ENCODE measurements at regions of chr19 and their contacts with region 1.

Region 1: DNA sequence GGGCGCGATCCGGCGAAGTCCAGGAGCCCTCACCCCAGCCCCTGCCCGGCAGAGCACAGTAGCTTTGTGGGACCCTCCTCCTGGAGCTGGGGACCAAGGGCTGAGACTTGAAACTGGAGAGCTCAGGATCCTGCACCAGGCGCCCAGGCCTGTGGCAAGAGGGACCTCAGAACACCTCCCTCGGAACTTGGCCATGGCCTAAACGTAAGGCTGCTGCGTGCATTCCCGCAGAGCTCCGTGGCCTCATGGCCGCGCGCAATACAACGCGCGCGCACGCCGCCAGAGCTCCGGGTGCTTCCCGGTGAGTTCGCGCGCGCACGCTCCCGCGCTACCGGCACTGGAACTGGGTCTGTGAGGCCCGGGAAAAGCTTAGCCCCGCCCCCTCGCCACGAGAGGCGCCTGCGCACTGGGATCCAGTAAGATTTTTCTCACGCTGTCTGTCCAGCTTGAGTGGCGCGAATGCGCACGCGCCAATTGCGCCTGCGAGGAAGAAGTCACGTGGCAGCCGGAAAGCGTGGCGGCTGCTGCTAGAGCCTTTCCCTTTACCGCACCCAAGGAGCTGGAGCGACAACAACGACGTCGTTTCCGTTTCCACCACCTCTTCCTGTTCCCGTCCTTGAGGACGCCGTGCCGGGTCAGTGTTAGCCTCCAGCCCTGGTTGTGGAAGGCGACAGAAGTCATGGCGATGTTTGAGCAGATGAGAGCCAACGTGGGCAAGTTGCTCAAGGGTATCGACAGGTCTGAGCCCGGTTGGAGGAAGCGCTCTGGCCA is at the start of gene EIF3K:
- DNase-seq: peak; percentile 99
- ATAC-seq: peak; percentile 74
- H3K4me3 Mint-ChIP-seq: peak within 1 kb of the TSS; percentile 100
- H3K27ac Mint-ChIP-seq: peak within 1 kb of the TSS; percentile 99
- H3K4me1 Mint-ChIP-seq: peaks cover 44% of the 10 kb centered on the region
- H3K27me3 Mint-ChIP-seq: no peaks in the 10 kb centered on the region
- total RNA-seq, gene EIF3K: 269 to 297 TPM

Region 2: GRCh38 chr19:38335949-38336637 is 282.7 kb before region 1 on chr19:
- CTCF ChIA-PET with region 1: no interaction called
- POLR2A ChIA-PET with region 1: no interaction called
- intact Hi-C with region 1: loop called in 1 of 2 experiments (anchors 1 kb)
- DNase-seq: peak; percentile 98
- ATAC-seq: peak; percentile 75
- H3K4me3 Mint-ChIP-seq: peak overlapping the region; percentile 82
- H3K27ac Mint-ChIP-seq: peak overlapping the region; percentile 98
- H3K4me1 Mint-ChIP-seq: peaks cover 12% of the 10 kb centered on the region
- H3K27me3 Mint-ChIP-seq: no peaks in the 10 kb centered on the region

Region 3: DNA sequence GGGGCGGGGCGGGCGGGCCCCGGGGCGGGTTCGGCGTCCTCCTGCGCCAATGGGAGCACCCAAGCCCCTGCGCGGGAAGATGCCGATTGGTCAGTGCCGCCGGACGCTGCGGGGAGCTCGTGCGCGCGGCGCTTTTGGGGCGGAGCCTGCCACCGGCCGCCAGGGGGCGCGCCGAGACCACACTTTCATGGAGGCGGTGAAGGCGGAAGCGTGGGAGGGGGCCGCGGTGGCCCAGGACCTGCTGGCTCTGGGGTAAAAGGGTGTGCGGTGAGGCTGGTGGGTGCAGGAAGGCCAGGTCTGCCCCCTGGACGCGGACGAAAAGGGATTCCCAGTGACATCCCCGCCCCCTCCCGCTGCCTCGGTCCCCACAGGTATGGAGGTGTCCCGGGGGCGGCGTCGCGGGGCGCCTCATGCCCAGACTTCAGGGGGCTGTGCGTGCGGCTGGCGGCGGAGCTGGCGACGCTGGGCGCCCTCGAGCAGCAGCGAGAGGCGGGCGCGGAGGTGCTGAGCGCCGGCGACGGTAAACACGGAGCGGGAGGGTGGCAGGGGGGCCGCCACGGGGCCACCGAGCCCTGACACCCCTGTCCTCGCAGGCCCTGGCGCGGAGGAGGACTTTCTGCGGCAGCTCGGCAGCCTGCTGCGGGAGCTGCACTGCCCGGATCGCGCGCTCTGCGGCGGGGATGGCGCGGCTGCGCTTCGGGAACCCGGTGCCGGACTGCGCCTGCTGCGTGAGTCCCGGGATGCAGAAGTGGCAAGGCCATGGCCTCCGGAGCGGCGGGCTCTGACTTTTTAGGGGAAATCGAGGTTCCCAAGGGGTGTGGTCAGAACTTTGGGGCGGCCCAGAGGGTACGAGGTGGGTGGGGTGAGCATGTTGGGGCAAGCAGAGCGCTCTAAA is 215.6 kb before region 1 on chr19 and contains the start of gene FAM98C:
- CTCF ChIA-PET with region 1: interaction called, 14 read pairs
- POLR2A ChIA-PET with region 1: interaction called, 4 read pairs
- intact Hi-C with region 1: loop called (anchors 1 to 5 kb)
- DNase-seq: peak; percentile 99
- ATAC-seq: peak; percentile 99
- H3K4me3 Mint-ChIP-seq: peak within 1 kb of the TSS; percentile 84
- H3K27ac Mint-ChIP-seq: peak within 1 kb of the TSS; percentile 85
- H3K4me1 Mint-ChIP-seq: peaks cover 16% of the 10 kb centered on the region
- H3K27me3 Mint-ChIP-seq: no peaks in the 10 kb centered on the region
- total RNA-seq, gene FAM98C: 19.6 to 24.8 TPM

Region 4: DNA sequence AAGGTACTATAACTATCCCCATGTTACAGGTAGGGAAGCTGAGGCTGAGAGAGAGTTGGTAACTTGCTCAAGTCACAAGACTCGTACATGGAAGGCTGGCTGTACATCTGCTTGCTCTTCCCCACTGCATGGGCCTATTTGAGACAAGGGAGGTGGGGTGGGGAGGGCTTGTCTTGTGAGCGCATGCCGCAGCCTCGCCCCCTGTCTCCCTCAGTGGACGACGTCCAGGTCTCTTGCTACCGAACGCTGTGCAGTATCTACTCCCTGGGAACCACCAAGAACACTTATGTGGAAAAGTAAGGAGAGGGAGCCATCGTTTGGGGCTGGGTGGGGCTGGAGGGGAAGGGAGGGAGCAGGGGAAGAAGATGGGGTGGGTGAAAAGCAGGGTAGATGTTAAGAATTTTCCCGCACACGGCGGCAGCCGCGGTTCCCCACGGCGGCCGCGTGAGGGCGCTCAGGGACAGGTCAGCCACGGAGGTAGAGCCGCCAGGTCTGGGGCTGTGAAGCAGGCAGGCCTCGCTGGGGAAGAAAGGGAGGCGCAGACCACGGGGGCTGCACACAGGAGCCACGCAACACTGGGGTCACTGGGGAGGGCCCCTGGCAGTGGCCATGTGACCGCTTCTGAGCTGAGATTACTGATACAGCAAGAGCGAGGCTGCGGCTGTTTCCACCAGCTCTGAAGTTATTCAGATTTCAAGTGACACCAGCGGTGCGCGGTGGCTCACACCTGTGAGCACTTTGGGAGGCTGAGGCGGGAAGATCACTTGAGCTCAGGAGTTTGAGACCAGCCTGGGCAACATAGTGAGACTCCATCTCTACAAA is 103.8 kb before region 1 on chr19:
- CTCF ChIA-PET with region 1: interaction called, 4 read pairs
- POLR2A ChIA-PET with region 1: interaction called, 3 read pairs
- intact Hi-C with region 1: loop called in 1 of 2 experiments (anchors 2 kb)
- DNase-seq: peak; percentile 88
- ATAC-seq: peak; percentile 96
- H3K4me3 Mint-ChIP-seq: no peak overlapping the region
- H3K27ac Mint-ChIP-seq: peak overlapping the region; percentile 42
- H3K4me1 Mint-ChIP-seq: peaks cover 16% of the 10 kb centered on the region
- H3K27me3 Mint-ChIP-seq: no peaks in the 10 kb centered on the region

Region 5: DNA sequence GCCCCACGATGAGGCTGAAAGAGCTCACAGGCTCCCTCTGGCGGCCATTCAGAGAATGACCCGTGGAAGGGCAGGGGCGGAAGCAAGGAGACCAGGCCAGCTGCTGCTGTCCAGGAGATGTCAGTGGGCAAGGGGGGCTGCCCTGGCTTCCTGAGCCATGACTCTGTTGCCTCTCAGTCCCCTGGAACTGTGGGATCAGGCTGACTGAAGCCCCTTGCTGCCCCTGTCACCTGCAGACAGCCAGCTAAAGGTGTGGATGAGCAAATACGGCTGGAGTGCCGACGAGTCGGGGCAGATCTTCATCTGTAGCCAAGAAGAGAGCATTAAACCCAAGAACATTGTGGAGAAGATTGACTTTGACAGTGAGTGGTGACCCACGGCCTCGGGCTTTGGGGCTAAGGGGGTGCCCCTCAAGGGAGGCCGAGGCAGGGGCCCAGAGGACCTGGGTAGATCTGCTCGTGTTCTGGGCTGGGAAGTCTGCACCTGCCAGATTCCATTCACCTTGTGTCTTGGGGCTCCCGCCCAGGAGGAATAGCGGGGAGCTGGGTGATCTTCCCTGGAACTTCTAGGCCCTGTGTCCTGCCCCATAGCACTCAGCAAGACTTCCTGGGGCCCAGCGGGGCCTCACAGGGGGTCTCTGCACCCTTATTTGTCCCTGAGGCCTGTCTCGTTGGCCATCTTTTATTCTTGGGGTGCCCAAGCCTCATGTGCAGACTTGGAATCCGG is 16.1 kb after region 1 on chr19:
- CTCF ChIA-PET with region 1: interaction called, 31 read pairs
- POLR2A ChIA-PET with region 1: interaction called, 4 read pairs
- intact Hi-C with region 1: loop called in 1 of 2 experiments (anchors 1 kb)
- DNase-seq: peak; percentile 84
- ATAC-seq: no peak
- H3K4me3 Mint-ChIP-seq: no peak overlapping the region
- H3K27ac Mint-ChIP-seq: peak overlapping the region; percentile 90
- H3K4me1 Mint-ChIP-seq: peaks cover 28% of the 10 kb centered on the region
- H3K27me3 Mint-ChIP-seq: no peaks in the 10 kb centered on the region

Region 6: DNA sequence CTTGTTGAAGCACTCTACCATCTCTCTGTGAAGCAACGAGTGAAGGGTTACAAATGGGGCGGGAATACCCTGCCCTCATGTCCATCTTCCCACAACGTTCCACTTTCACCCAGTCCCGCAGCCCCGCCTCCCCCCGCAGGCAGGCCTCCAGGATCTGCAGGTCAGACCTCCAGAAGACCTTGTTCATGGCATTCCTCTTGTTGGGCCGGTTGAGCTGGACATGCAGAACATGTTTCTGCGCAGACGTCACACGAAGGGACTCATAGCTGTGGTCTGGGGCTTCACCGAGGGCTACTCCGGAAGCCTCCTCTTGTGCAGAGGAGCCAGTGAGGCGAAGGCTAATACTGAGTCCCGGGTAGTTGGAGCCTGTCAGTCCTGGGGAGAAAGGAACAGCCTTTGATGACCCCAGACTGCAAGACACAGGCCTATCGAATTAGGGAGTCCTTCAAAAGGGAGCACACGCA is 212.4 kb after region 1 on chr19:
- CTCF ChIA-PET with region 1: no interaction called
- POLR2A ChIA-PET with region 1: interaction called, 3 read pairs
- intact Hi-C with region 1: loop called in 1 of 2 experiments (anchors 1 kb)
- DNase-seq: peak; percentile 58
- ATAC-seq: peak; percentile 53
- H3K4me3 Mint-ChIP-seq: peak overlapping the region; percentile 87
- H3K27ac Mint-ChIP-seq: peak overlapping the region; percentile 83
- H3K4me1 Mint-ChIP-seq: peaks cover 25% of the 10 kb centered on the region
- H3K27me3 Mint-ChIP-seq: no peaks in the 10 kb centered on the region

Measured in activated CD4-positive, alpha-beta T cell treated with anti-CD3 and anti-CD28 coated beads for 36 hours (primary cell).